CD4-positive, alpha-beta memory T cell (primary cell): ENCODE measurements at regions of chr1 and their contacts with region 1.

Region 1: GRCh38 chr1:201792534-201793305 is 36.2 kb upstream of the IPO9 start:
- DNase-seq: peak in 4 of 5 donors; percentile 32 to 43 (median 40)
- H3K4me3 ChIP-seq: no peak overlapping the region
- H3K4me3 Mint-ChIP-seq: no peak overlapping the region
- H3K27ac ChIP-seq: no peak overlapping the region
- H3K27ac Mint-ChIP-seq: no peak overlapping the region
- H3K4me1 ChIP-seq: no peaks in the 10 kb centered on the region
- H3K4me1 Mint-ChIP-seq: no peaks in the 10 kb centered on the region
- H3K27me3 ChIP-seq: no peaks in the 10 kb centered on the region
- H3K27me3 Mint-ChIP-seq: no peaks in the 10 kb centered on the region

Region 2: DNA sequence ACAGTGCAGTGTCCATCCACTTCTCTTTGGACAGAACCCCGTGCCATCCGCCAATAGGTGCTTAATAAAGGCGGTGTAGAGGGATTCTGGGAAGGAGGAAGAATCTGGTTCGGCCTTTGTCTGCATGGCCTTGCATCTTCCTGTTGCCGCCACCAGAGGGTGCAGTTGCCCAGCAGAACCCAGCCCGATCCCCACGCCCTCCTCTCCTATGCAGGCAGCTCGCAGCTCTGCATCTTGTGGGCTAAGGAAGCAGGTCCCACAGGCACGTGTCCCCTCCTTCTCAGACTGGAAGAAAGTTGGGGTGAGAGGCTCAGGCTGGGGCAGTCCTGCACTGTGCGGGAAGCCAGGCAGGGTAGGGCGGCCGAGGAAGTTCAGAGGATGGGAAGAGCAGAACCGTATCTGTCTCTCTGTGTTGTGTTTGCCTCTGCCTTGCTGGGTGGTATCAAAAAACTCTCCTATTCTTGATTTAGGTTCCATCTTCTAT is 233.0 kb before region 1 on chr1:
- CTCF ChIA-PET with region 1: interaction called, 81 read pairs
- POLR2A ChIA-PET with region 1: no interaction called
- intact Hi-C with region 1: loop called (anchors 1 kb)
- DNase-seq: peak; percentile 42 to 54 (median 52)
- H3K4me3 ChIP-seq: no peak overlapping the region
- H3K4me3 Mint-ChIP-seq: no peak overlapping the region
- H3K27ac ChIP-seq: no peak overlapping the region
- H3K27ac Mint-ChIP-seq: peak overlapping the region in 1 of 7 donors; percentile 22
- H3K4me1 ChIP-seq: no peaks in the 10 kb centered on the region
- H3K4me1 Mint-ChIP-seq: peaks cover 0 to 5% (median 3%) of the 10 kb centered on the region in 4 donors
- H3K27me3 ChIP-seq: no peaks in the 10 kb centered on the region
- H3K27me3 Mint-ChIP-seq: no peaks in the 10 kb centered on the region

Region 3: DNA sequence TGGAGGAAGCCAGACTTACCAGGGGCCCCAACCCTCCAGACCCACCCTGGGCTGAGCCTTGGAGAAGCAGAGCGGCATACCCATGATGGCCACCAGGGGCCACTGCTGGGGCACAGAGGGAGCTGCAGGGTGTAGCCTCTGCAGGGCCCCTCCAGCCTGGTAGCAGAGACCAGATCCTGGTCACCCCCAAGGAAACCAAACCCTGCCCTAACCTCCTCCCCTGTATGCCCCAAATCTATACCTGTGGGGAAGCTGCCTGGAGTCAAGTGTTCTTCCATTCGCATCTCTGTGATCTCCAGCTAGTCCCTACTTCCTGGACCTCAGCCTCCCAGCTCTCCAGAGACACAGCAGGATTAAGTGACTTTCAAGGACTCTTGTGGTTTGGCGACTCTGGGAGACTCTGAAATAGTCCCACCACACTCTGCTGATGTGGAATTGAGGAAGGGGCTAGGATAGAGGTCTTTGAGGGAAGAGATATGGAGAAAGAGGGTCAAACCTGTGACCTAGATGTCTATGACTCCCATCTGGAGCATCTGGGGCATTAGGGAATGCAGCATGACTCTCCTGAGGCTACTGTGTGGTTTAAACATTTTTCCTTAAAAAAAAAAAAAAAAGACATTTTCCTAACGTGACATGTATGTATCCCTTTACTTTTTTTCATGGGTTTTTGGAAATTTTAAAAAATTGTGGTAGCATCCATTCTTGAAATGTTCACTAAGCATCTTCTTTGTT is 83.0 kb before region 1 on chr1:
- CTCF ChIA-PET with region 1: interaction called, 178 read pairs
- POLR2A ChIA-PET with region 1: interaction called, 3 read pairs
- intact Hi-C with region 1: loop called (anchors 1 kb)
- DNase-seq: peak in 4 of 5 donors; percentile 35 to 41 (median 36)
- H3K4me3 ChIP-seq: no peak overlapping the region
- H3K4me3 Mint-ChIP-seq: no peak overlapping the region
- H3K27ac ChIP-seq: no peak overlapping the region
- H3K27ac Mint-ChIP-seq: no peak overlapping the region
- H3K4me1 ChIP-seq: no peaks in the 10 kb centered on the region
- H3K4me1 Mint-ChIP-seq: no peaks in the 10 kb centered on the region
- H3K27me3 ChIP-seq: no peaks in the 10 kb centered on the region
- H3K27me3 Mint-ChIP-seq: peaks cover 0 to 2% of the 10 kb centered on the region in 2 donors

Region 4: GRCh38 chr1:201774224-201774982 is 18.3 kb before region 1 on chr1:
- CTCF ChIA-PET with region 1: interaction called, 13 read pairs
- POLR2A ChIA-PET with region 1: no interaction called
- intact Hi-C with region 1: no loop called
- DNase-seq: no peak
- H3K4me3 ChIP-seq: no peak overlapping the region
- H3K4me3 Mint-ChIP-seq: no peak overlapping the region
- H3K27ac ChIP-seq: no peak overlapping the region
- H3K27ac Mint-ChIP-seq: peak overlapping the region in 1 of 7 donors; percentile 19
- H3K4me1 ChIP-seq: no peaks in the 10 kb centered on the region
- H3K4me1 Mint-ChIP-seq: no peaks in the 10 kb centered on the region
- H3K27me3 ChIP-seq: no peaks in the 10 kb centered on the region
- H3K27me3 Mint-ChIP-seq: peaks cover 0 to 3% of the 10 kb centered on the region in 2 donors

Region 5: DNA sequence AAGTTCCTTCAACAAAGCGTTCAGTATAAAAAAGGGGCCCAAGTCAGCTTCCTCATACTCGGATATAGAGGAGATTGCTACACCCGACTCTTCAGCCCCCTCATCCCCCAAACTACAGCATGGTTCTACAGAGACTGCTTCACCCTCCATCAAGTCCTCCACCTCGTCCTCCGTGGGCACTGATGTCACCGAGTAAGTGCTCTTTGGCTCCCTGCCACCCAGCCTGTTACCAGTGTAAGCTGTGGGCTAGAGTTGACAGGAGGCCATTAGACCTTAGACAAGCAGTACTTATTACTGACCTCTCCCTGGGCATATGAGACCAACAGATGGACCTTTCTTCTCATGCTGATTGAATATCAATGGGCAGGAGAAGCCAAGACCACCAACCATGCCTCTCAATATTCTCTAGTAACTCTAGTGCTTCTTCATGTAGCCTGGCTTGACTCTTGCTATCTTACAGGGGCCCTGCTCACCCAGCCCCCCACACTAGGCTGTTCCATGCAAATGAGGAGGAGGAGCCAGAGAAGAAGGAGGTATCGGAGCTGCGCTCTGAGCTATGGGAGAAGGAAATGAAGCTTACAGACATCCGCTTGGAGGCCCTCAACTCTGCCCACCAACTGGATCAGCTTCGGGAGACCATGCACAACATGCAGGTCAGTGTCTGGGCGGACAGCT is 15.4 kb after region 1 on chr1:
- CTCF ChIA-PET with region 1: interaction called, 16 read pairs
- POLR2A ChIA-PET with region 1: no interaction called
- intact Hi-C with region 1: no loop called
- DNase-seq: no peak
- H3K4me3 ChIP-seq: no peak overlapping the region
- H3K4me3 Mint-ChIP-seq: no peak overlapping the region
- H3K27ac ChIP-seq: no peak overlapping the region
- H3K27ac Mint-ChIP-seq: no peak overlapping the region
- H3K4me1 ChIP-seq: no peaks in the 10 kb centered on the region
- H3K4me1 Mint-ChIP-seq: no peaks in the 10 kb centered on the region
- H3K27me3 ChIP-seq: no peaks in the 10 kb centered on the region
- H3K27me3 Mint-ChIP-seq: peaks cover 0 to 1% of the 10 kb centered on the region in 2 donors